T-cell (primary cell): ENCODE measurements at regions of chr9 and their contacts with region 1.

Region 1: GRCh38 chr9:31188496-31188895 is 1195.9 kb upstream of the ACO1 start:
- DNase-seq: no peak
- ATAC-seq: no peak
- H3K4me3 ChIP-seq: no peak overlapping the region
- H3K4me3 Mint-ChIP-seq: no peak overlapping the region
- H3K27ac ChIP-seq: no peak overlapping the region
- H3K27ac Mint-ChIP-seq: no peak overlapping the region
- H3K4me1 ChIP-seq: no peaks in the 10 kb centered on the region
- H3K4me1 Mint-ChIP-seq: no peaks in the 10 kb centered on the region
- H3K27me3 ChIP-seq: no peaks in the 10 kb centered on the region
- H3K27me3 Mint-ChIP-seq: no peaks in the 10 kb centered on the region

Region 2: GRCh38 chr9:31135579-31135978 is 52.9 kb before region 1 on chr9:
- CTCF ChIA-PET with region 1: no interaction called
- POLR2A ChIA-PET with region 1: interaction called in 1 of 2 experiments, 11 read pairs
- DNase-seq: no peak
- ATAC-seq: no peak
- H3K4me3 ChIP-seq: no peak overlapping the region
- H3K4me3 Mint-ChIP-seq: no peak overlapping the region
- H3K27ac ChIP-seq: no peak overlapping the region
- H3K27ac Mint-ChIP-seq: no peak overlapping the region
- H3K4me1 ChIP-seq: no peaks in the 10 kb centered on the region
- H3K4me1 Mint-ChIP-seq: peaks cover 7 to 8% (median 8%) of the 10 kb centered on the region in 3 donors
- H3K27me3 ChIP-seq: no peaks in the 10 kb centered on the region
- H3K27me3 Mint-ChIP-seq: no peaks in the 10 kb centered on the region

Region 3: GRCh38 chr9:31166516-31166915 is 22.0 kb before region 1 on chr9:
- CTCF ChIA-PET with region 1: no interaction called
- POLR2A ChIA-PET with region 1: no interaction called
- DNase-seq: no peak
- ATAC-seq: no peak
- H3K4me3 ChIP-seq: no peak overlapping the region
- H3K4me3 Mint-ChIP-seq: no peak overlapping the region
- H3K27ac ChIP-seq: no peak overlapping the region
- H3K27ac Mint-ChIP-seq: peak overlapping the region in 1 of 2 donors; percentile 12
- H3K4me1 ChIP-seq: no peaks in the 10 kb centered on the region
- H3K4me1 Mint-ChIP-seq: peaks cover 0 to 4% (median 3%) of the 10 kb centered on the region in 3 donors
- H3K27me3 ChIP-seq: no peaks in the 10 kb centered on the region
- H3K27me3 Mint-ChIP-seq: no peaks in the 10 kb centered on the region

Region 4: DNA sequence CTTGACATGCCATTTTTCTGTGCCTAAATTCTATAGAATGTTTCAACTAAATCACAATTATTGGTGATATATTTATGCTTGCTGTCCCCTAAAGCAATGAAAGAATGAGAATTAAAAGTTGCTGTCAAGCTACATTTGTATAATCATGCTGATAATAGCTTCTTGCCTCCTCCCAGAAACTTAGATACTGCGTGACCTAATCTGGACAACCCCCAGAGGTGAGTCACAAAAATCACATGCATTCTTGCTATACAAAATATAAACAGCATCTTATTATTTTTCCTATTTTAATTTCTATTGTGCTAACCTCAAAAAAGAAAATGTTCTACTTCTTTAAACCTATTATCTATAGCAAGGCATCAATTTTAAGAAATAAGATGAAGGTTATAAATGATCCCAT is 200.2 kb after region 1 on chr9:
- CTCF ChIA-PET with region 1: no interaction called
- POLR2A ChIA-PET with region 1: no interaction called
- DNase-seq: no peak
- ATAC-seq: no peak
- H3K4me3 ChIP-seq: no peak overlapping the region
- H3K4me3 Mint-ChIP-seq: no peak overlapping the region
- H3K27ac ChIP-seq: no peak overlapping the region
- H3K27ac Mint-ChIP-seq: no peak overlapping the region
- H3K4me1 ChIP-seq: peaks cover 0 to 6% of the 10 kb centered on the region in 2 experiments
- H3K4me1 Mint-ChIP-seq: peaks cover 18 to 20% (median 19%) of the 10 kb centered on the region in 3 donors
- H3K27me3 ChIP-seq: no peaks in the 10 kb centered on the region
- H3K27me3 Mint-ChIP-seq: no peaks in the 10 kb centered on the region